GM12878 (cell line): ENCODE measurements at regions of chrX and their contacts with region 1.

Region 1: DNA sequence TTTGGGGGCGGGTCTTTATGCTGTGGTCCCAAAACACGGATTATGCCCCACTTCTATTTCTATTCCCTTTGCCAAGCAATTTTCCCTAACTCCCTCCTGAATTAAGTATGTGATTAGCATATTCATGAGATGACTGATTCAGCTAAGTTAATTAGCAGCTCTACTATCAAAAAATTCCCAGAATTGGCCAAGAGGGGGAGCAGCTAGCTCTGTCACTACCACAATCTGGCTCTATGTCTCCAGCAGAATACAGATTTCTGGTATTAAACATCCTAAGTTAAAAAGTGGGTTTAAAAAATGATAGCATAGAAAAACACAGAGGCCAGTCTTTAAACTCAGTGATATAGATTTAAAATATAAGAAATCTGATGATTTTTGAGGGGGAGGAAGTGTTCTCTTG is 80.3 kb downstream of the GPC4 start:
- DNase-seq: no peak
- ATAC-seq: peak; percentile 56; the same call in 2 of the 3 replicates
- H3K4me3 ChIP-seq: no peak overlapping the region
- H3K27ac ChIP-seq: no peak overlapping the region
- H3K4me1 ChIP-seq: no peaks in the 10 kb centered on the region
- H3K27me3 ChIP-seq: no peaks in the 10 kb centered on the region
- CTCF ChIP-seq: peak; percentile 46 to 51 (median 49); a peak in 5 of 6 replicates
- EP300 ChIP-seq: no peak
- POLR2A ChIP-seq: no peak
- RAD21 ChIP-seq: peak; percentile 40

Region 2: DNA sequence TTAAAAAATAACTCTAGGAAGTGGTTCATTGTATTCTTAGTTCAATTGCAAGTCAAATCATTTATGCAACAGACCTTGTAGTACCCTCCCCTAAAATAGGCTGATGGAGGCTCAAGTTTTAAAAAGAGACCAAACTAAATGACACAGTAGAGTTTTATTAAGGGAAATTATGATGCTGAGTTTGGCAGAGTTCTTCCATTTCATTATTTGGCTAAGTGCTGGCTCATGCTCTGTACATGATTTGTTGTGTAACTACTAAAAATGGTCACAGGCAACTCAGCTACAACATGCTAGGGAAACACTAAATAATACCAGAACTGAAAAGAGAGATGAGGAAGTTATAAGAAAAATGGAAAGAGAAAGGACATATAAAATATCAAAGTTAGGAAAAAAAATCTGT is 20.7 kb before region 1 on chrX:
- CTCF ChIA-PET with region 1: interaction called, 10 read pairs
- POLR2A ChIA-PET with region 1: interaction called, 3 read pairs
- RAD21 ChIA-PET with region 1: no interaction called
- SMC1A ChIA-PET with region 1: interaction called, 15 read pairs
- in situ Hi-C with region 1: no loop called
- intact Hi-C with region 1: no loop called
- DNase-seq: no peak
- ATAC-seq: no peak
- H3K4me3 ChIP-seq: no peak overlapping the region
- H3K27ac ChIP-seq: no peak overlapping the region
- H3K4me1 ChIP-seq: no peaks in the 10 kb centered on the region
- H3K27me3 ChIP-seq: no peaks in the 10 kb centered on the region
- CTCF ChIP-seq: no peak
- EP300 ChIP-seq: no peak
- POLR2A ChIP-seq: no peak
- RAD21 ChIP-seq: no peak

Region 3: GRCh38 chrX:133350751-133351150 is 15.7 kb after region 1 on chrX:
- CTCF ChIA-PET with region 1: interaction called, 30 read pairs
- POLR2A ChIA-PET with region 1: interaction called, 3 read pairs
- RAD21 ChIA-PET with region 1: interaction called, 7 read pairs
- SMC1A ChIA-PET with region 1: interaction called, 23 read pairs
- in situ Hi-C with region 1: no loop called
- intact Hi-C with region 1: no loop called
- DNase-seq: no peak
- ATAC-seq: no peak
- H3K4me3 ChIP-seq: no peak overlapping the region
- H3K27ac ChIP-seq: no peak overlapping the region
- H3K4me1 ChIP-seq: no peaks in the 10 kb centered on the region
- H3K27me3 ChIP-seq: no peaks in the 10 kb centered on the region
- CTCF ChIP-seq: no peak
- EP300 ChIP-seq: no peak
- POLR2A ChIP-seq: no peak
- RAD21 ChIP-seq: no peak

Region 4: DNA sequence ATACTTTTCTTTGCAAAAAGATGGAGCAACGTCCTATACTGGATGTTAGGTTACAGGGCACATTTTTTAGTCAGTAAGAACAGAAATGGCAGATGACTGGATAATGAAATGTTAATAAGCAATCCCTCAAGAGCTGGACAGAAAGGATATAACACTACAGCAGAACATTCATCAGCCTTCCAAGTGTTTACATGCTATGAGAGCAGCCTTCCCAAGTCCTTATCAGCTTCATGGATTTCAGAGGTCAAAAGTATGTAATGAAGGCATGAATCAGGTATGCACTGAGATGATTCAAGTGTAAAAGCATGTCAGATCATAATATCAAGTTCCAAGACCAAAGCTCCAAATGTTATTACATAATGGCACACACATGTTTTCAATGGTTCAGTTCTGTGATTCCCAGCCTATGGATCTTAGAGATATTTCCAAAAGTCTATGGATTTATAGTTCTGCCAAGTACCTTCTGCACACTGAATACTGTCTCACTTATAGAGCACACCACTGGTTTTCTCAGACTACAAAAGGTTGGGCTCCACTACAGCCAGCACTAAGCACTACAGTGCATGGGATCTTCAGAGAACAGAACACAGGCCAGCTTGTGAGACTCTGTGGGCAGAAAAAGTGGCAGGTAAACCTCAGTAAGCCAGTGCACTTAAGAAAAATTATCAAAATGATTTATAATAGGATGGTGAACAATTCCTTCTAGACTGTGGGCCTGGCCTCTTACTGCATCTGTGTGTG is 31.0 kb after region 1 on chrX:
- CTCF ChIA-PET with region 1: interaction called, 4 read pairs
- POLR2A ChIA-PET with region 1: no interaction called
- RAD21 ChIA-PET with region 1: interaction called, 7 read pairs
- SMC1A ChIA-PET with region 1: interaction called, 11 read pairs
- in situ Hi-C with region 1: no loop called
- intact Hi-C with region 1: no loop called
- DNase-seq: no peak
- ATAC-seq: 0 out of 3 replicates have a peak, but pooled peaks have one; percentile 28
- H3K4me3 ChIP-seq: no peak overlapping the region
- H3K27ac ChIP-seq: no peak overlapping the region
- H3K4me1 ChIP-seq: no peaks in the 10 kb centered on the region
- H3K27me3 ChIP-seq: no peaks in the 10 kb centered on the region
- CTCF ChIP-seq: no peak
- EP300 ChIP-seq: no peak
- POLR2A ChIP-seq: no peak
- RAD21 ChIP-seq: no peak

Region 5: GRCh38 chrX:133390678-133391077 is 55.7 kb after region 1 on chrX:
- CTCF ChIA-PET with region 1: interaction called, 8 read pairs
- POLR2A ChIA-PET with region 1: interaction called, 3 read pairs
- RAD21 ChIA-PET with region 1: interaction called, 11 read pairs
- SMC1A ChIA-PET with region 1: interaction called, 4 read pairs
- in situ Hi-C with region 1: no loop called
- intact Hi-C with region 1: no loop called
- DNase-seq: no peak
- ATAC-seq: no peak
- H3K4me3 ChIP-seq: no peak overlapping the region
- H3K27ac ChIP-seq: no peak overlapping the region
- H3K4me1 ChIP-seq: no peaks in the 10 kb centered on the region
- H3K27me3 ChIP-seq: no peaks in the 10 kb centered on the region
- CTCF ChIP-seq: no peak
- EP300 ChIP-seq: no peak
- POLR2A ChIP-seq: no peak
- RAD21 ChIP-seq: no peak

Region 6: GRCh38 chrX:133670383-133670782 is 335.4 kb after region 1 on chrX:
- CTCF ChIA-PET with region 1: interaction called, 38 read pairs
- POLR2A ChIA-PET with region 1: no interaction called
- RAD21 ChIA-PET with region 1: interaction called, 15 read pairs
- SMC1A ChIA-PET with region 1: interaction called, 33 read pairs
- in situ Hi-C with region 1: no loop called
- intact Hi-C with region 1: loop called (anchors 1 kb)
- DNase-seq: peak; percentile 1
- ATAC-seq: peak; percentile 36; the same call in 1 of the 3 replicates
- H3K4me3 ChIP-seq: no peak overlapping the region
- H3K27ac ChIP-seq: no peak overlapping the region
- H3K4me1 ChIP-seq: no peaks in the 10 kb centered on the region
- H3K27me3 ChIP-seq: no peaks in the 10 kb centered on the region
- CTCF ChIP-seq: peak; percentile 62 to 65 (median 64)
- EP300 ChIP-seq: no peak
- POLR2A ChIP-seq: no peak
- RAD21 ChIP-seq: peak; percentile 75